CD14-positive monocyte (primary cell): ENCODE measurements at regions of chr10 and their contacts with region 1.

Region 1: DNA sequence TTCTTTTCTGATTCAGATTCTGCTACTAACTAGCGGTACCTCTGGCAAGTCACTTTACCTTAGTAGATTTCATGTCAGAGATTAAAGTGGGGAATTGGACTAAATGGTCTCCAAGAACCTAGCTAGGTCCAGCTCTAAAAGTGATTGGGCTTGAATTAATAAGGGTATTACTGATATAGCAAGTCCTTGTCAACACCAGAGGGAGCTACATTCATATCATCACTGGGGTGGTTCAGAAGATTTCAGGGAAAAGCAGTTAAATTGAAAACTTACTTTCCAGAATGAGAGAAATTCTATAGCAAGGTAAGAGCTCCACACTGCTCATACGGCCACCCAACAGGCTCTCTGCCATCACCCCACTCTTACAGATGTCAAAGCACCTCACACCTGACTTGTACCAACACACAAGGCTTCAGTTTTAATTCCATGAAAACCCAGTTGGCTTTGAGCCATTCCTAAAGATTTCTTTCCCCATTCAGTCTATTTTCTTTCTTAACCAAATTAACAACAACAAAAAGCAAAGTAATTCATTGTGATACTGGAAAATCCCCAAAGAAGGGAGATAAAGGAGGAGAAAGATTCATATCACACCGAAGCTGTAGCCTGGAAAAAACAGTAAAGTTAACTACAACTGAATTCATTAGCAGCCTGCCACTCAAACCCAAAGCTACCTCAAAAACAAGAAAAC is 38.0 kb upstream of the SPOCK2 start:
- DNase-seq: peak in 2 of 3 donors; percentile 7 to 16
- H3K4me3 ChIP-seq: no peak overlapping the region
- H3K4me3 Mint-ChIP-seq: no peak overlapping the region
- H3K27ac ChIP-seq: no peak overlapping the region
- H3K27ac Mint-ChIP-seq: no peak overlapping the region
- H3K4me1 ChIP-seq: peaks cover 0 to 3% of the 10 kb centered on the region in 2 donors
- H3K4me1 Mint-ChIP-seq: peaks cover 5% of the 10 kb centered on the region
- H3K27me3 ChIP-seq: no peaks in the 10 kb centered on the region
- H3K27me3 Mint-ChIP-seq: no peaks in the 10 kb centered on the region
- CTCF ChIP-seq: peak; percentile 46

Region 2: GRCh38 chr10:72223743-72224101 is 97.4 kb after region 1 on chr10:
- intact Hi-C with region 1: loop called in 1 of 2 experiments (anchors 10 kb)
- DNase-seq: peak; percentile 60 to 95 (median 85)
- H3K4me3 ChIP-seq: peak overlapping the region in 1 of 3 experiments; percentile 35
- H3K4me3 Mint-ChIP-seq: peak overlapping the region; percentile 22 to 50
- H3K27ac ChIP-seq: peak overlapping the region; percentile 77 to 80
- H3K27ac Mint-ChIP-seq: peak overlapping the region; percentile 80 to 98 (median 93)
- H3K4me1 ChIP-seq: peaks cover 27 to 31% of the 10 kb centered on the region in 2 donors
- H3K4me1 Mint-ChIP-seq: peaks cover 28% of the 10 kb centered on the region
- H3K27me3 ChIP-seq: no peaks in the 10 kb centered on the region
- H3K27me3 Mint-ChIP-seq: peaks cover 0 to 2% (median 0%) of the 10 kb centered on the region in 3 donors
- CTCF ChIP-seq: no peak

Region 3: DNA sequence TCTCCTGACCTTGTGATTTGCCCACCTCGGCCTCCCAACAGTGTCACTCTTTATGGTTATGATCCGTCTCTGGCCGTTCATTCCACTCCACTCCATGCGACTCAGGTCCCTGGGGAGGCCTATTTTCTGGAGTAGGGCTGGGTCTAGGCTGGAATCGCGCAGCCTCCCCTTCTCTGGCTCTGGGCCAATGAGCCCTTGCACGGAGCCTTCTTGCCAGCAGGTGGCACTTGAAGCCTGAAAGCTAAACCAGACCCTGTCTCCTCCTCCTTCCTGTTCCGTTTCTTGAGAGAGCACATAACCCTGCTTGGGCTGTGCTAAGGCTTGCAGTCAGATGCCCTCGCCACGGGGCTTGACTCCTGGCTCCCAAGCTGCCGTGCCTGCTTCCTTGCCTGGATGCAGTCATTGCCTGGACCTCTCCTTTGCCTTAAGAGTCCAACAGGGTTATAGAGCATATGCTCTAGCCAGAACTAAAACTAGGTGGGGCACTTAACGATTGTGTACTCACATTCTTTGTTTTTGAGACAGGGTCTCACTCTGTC is 238.0 kb after region 1 on chr10:
- intact Hi-C with region 1: no loop called
- DNase-seq: peak; percentile 80 to 87 (median 85)
- H3K4me3 ChIP-seq: peak overlapping the region in 1 of 3 experiments; percentile 18
- H3K4me3 Mint-ChIP-seq: peak overlapping the region in 1 of 2 donors; percentile 65
- H3K27ac ChIP-seq: peak overlapping the region; percentile 26 to 60
- H3K27ac Mint-ChIP-seq: peak overlapping the region in 5 of 7 donors; percentile 22 to 77 (median 56)
- H3K4me1 ChIP-seq: peaks cover 10 to 11% of the 10 kb centered on the region in 2 donors
- H3K4me1 Mint-ChIP-seq: peaks cover 15% of the 10 kb centered on the region
- H3K27me3 ChIP-seq: no peaks in the 10 kb centered on the region
- H3K27me3 Mint-ChIP-seq: no peaks in the 10 kb centered on the region
- CTCF ChIP-seq: peak; percentile 83